Colonic mucosa (tissue), 4 donors: ENCODE measurements at regions of chr14 and their contacts with region 1.

Region 1: GRCh38 chr14:69149461-69150244 is 3.3 kb downstream of the DCAF5 start:
- DNase-seq: no peak
- H3K4me3 ChIP-seq: no peak overlapping the region
- H3K27ac ChIP-seq: no peak overlapping the region
- H3K4me1 ChIP-seq: no peaks in the 10 kb centered on the region
- H3K27me3 ChIP-seq: no peaks in the 10 kb centered on the region
- CTCF ChIP-seq: no peak

Region 2: DNA sequence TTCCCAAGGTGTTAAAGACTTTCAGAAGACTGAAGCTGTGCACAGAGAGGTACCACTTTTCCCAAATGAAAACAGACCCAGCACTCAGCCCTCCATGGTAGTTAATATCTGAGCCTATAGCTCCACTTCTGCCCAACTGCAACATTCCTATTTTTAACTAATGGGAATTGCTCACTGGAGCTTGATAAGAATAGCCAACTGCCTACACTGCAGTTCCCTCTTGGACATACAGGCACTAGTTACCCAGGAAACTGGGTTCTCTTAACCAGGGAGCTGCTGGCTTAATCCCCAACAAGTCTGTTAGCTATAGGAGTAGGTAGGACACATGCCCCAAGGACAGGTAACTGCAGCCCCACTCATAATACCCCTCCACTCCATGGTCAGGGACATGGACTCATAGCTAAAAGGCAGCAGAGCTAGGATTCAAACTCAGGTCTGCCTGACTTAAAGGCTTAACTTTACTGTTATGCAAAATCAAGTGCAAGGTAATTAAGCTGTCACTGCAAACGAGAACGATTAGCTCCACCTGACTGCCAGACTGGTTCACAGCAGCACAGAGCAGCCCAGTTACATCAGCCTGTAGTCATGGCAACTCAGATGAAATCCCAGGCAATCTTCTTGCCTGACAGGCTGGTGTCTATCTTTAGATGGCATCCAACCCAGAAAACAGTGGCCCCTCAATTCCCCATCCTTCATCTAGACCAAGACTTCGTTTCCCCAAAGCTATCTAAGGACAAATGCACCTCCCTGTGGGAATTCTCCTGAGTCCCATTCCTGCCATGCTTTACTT is 93.5 kb before region 1 on chr14:
- intact Hi-C with region 1: no loop called
- DNase-seq: no peak
- H3K4me3 ChIP-seq: no peak overlapping the region
- H3K27ac ChIP-seq: no peak overlapping the region
- H3K4me1 ChIP-seq: no peaks in the 10 kb centered on the region
- H3K27me3 ChIP-seq: no peaks in the 10 kb centered on the region
- CTCF ChIP-seq: no peak

Region 3: GRCh38 chr14:69231462-69231861 is 81.8 kb after region 1 on chr14:
- intact Hi-C with region 1: loop called (anchors 10 kb)
- DNase-seq: no peak
- H3K4me3 ChIP-seq: no peak overlapping the region
- H3K27ac ChIP-seq: no peak overlapping the region
- H3K4me1 ChIP-seq: no peaks in the 10 kb centered on the region
- H3K27me3 ChIP-seq: no peaks in the 10 kb centered on the region
- CTCF ChIP-seq: no peak